ENCODE measurements at regions of chr3 and their contacts with region 1.

Region 1: GRCh38 chr3:108036984-108037741 is 53.7 kb downstream of the CD47 start:
- DNase-seq: peak in 1 of 14 experiments; percentile 13
- ATAC-seq: no peak
- H3K4me3 ChIP-seq: no peak overlapping the region
- H3K4me3 Mint-ChIP-seq: no peak overlapping the region
- H3K27ac ChIP-seq: no peak overlapping the region
- H3K27ac Mint-ChIP-seq: peak overlapping the region; percentile 72
- H3K4me1 ChIP-seq: no peaks in the 10 kb centered on the region
- H3K4me1 Mint-ChIP-seq: peaks cover 21% of the 10 kb centered on the region
- H3K27me3 ChIP-seq: no peaks in the 10 kb centered on the region
- H3K27me3 Mint-ChIP-seq: no peaks in the 10 kb centered on the region
- CTCF ChIP-seq: no peak

Region 2: DNA sequence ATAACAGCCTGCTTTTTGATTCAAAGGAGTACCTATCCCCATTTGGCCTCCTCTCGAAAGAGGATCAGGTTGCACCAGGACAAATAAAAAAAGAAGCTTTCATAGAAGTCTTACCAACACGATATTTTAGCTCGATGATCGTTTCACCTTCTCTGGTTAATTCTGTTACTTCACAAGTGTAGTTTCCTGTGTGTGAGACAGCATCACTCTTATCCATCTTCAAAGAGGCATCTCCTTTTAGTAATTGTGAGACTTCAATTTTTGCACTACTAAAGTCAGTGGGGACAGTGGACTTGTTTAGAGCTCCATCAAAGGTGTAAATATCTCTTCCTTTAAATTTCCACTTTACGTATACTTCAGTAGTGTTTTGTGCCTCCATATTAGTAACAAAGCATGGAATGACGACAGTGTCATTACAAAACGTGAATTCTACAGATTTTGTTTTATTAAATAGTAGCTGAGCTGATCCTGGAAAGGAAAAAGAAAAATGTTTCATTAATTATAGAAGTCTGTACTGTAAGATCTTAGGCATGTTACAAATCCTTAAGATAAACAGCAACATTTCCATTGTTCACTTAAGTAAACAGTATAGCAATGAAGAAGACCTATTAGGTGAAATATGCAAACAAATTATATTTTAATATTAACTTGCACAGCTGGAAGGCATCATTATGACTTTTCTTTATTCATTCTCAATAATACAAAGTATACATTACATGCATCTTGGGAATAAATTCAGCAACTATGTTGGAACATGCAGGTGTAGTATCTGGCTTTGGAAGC is 42.9 kb after region 1 on chr3:
- CTCF ChIA-PET with region 1: no interaction called
- POLR2A ChIA-PET with region 1: no interaction called
- intact Hi-C with region 1: loop called in 1 of 2 experiments (anchors 5 kb)
- DNase-seq: peak in 1 of 14 experiments; percentile 22
- ATAC-seq: peak; percentile 61
- H3K4me3 ChIP-seq: no peak overlapping the region
- H3K4me3 Mint-ChIP-seq: peak overlapping the region; percentile 34
- H3K27ac ChIP-seq: no peak overlapping the region
- H3K27ac Mint-ChIP-seq: peak overlapping the region; percentile 69
- H3K4me1 ChIP-seq: peaks cover 18% of the 10 kb centered on the region
- H3K4me1 Mint-ChIP-seq: peaks cover 70% of the 10 kb centered on the region
- H3K27me3 ChIP-seq: no peaks in the 10 kb centered on the region
- H3K27me3 Mint-ChIP-seq: no peaks in the 10 kb centered on the region
- CTCF ChIP-seq: no peak

Region 3: GRCh38 chr3:108940568-108941263 is 903.6 kb after region 1 on chr3:
- CTCF ChIA-PET with region 1: no interaction called
- POLR2A ChIA-PET with region 1: no interaction called
- intact Hi-C with region 1: no loop called
- DNase-seq: no peak
- ATAC-seq: no peak
- H3K4me3 ChIP-seq: no peak overlapping the region
- H3K4me3 Mint-ChIP-seq: no peak overlapping the region
- H3K27ac ChIP-seq: no peak overlapping the region
- H3K27ac Mint-ChIP-seq: no peak overlapping the region
- H3K4me1 ChIP-seq: no peaks in the 10 kb centered on the region
- H3K4me1 Mint-ChIP-seq: no peaks in the 10 kb centered on the region
- H3K27me3 ChIP-seq: no peaks in the 10 kb centered on the region
- H3K27me3 Mint-ChIP-seq: no peaks in the 10 kb centered on the region
- CTCF ChIP-seq: no peak